K562 (cell line): ENCODE measurements at regions of chr6 and their contacts with region 1.

Region 1: GRCh38 chr6:12605888-12606345 is 110.7 kb upstream of the PHACTR1 start:
- DNase-seq: peak; percentile 34 to 75 (median 45)
- ATAC-seq: peak; percentile 99
- H3K4me3 ChIP-seq: no peak overlapping the region
- H3K27ac ChIP-seq: no peak overlapping the region
- H3K4me1 ChIP-seq: no peaks in the 10 kb centered on the region
- H3K27me3 ChIP-seq: no peaks in the 10 kb centered on the region
- CTCF ChIP-seq: peak; percentile 73 to 83 (median 80)
- EP300 ChIP-seq: no peak
- POLR2A ChIP-seq: no peak
- RAD21 ChIP-seq: peak; percentile 82 to 83

Region 2: DNA sequence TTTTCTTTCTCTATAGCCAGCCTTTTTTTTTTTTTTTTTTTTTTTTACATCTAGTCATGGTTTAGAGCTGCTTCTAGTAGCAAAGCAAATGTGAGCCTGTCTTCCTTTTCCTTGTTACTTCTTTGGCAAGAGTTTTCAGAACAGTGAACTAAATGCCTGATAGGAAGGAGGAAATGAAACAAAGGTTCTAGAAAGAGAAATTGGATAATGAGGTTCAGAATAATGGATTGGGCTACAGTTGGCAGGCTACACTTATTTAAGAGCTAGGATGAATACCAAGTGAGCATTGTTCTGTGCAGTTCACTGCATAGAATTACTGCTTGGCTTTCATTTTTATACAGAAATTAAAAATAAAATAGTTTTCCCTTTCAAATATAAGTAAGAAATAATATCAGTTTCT is 515.2 kb before region 1 on chr6:
- CTCF ChIA-PET with region 1: no interaction called
- POLR2A ChIA-PET with region 1: no interaction called
- in situ Hi-C with region 1: no loop called
- intact Hi-C with region 1: no loop called
- DNase-seq: no peak
- ATAC-seq: no peak; the same call in 2 of the 3 replicates
- H3K4me3 ChIP-seq: no peak overlapping the region
- H3K27ac ChIP-seq: no peak overlapping the region
- H3K4me1 ChIP-seq: no peaks in the 10 kb centered on the region
- H3K27me3 ChIP-seq: no peaks in the 10 kb centered on the region
- CTCF ChIP-seq: no peak
- EP300 ChIP-seq: no peak
- POLR2A ChIP-seq: no peak
- RAD21 ChIP-seq: no peak

Region 3: GRCh38 chr6:12150812-12151432 is 455.0 kb before region 1 on chr6:
- CTCF ChIA-PET with region 1: interaction called, 3 read pairs
- POLR2A ChIA-PET with region 1: no interaction called
- in situ Hi-C with region 1: no loop called
- intact Hi-C with region 1: loop called (anchors 10 kb)
- DNase-seq: peak; percentile 25 to 63 (median 46)
- ATAC-seq: peak; percentile 77
- H3K4me3 ChIP-seq: no peak overlapping the region
- H3K27ac ChIP-seq: no peak overlapping the region
- H3K4me1 ChIP-seq: no peaks in the 10 kb centered on the region
- H3K27me3 ChIP-seq: no peaks in the 10 kb centered on the region
- CTCF ChIP-seq: peak; percentile 52 to 62 (median 59)
- EP300 ChIP-seq: no peak
- POLR2A ChIP-seq: no peak
- RAD21 ChIP-seq: peak; percentile 18 to 47; a peak in 2 of 4 replicates

Region 4: DNA sequence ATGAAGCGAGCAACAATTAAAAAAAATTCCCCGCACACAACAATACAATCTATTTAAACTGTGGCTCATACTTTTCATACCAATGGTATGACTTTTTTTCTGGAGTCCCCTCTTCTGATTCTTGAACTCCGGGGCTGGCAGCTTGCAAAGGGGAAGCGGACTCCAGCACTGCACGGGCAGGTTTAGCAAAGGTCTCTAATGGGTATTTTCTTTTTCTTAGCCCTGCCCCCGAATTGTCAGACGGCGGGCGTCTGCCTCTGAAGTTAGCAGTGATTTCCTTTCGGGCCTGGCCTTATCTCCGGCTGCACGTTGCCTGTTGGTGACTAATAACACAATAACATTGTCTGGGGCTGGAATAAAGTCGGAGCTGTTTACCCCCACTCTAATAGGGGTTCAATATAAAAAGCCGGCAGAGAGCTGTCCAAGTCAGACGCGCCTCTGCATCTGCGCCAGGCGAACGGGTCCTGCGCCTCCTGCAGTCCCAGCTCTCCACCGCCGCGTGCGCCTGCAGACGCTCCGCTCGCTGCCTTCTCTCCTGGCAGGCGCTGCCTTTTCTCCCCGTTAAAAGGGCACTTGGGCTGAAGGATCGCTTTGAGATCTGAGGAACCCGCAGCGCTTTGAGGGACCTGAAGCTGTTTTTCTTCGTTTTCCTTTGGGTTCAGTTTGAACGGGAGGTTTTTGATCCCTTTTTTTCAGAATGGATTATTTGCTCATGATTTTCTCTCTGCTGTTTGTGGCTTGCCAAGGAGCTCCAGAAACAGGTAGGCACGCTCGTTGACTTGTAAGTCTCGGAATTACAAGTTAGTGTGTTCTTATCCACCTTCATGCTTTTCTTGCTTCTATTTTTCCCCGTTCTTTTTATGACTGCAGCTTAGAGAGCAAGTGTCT is 315.7 kb before region 1 on chr6 and contains the start of gene EDN1:
- CTCF ChIA-PET with region 1: interaction called, 3 read pairs
- POLR2A ChIA-PET with region 1: no interaction called
- in situ Hi-C with region 1: no loop called
- intact Hi-C with region 1: loop called (anchors 2 kb)
- DNase-seq: peak; percentile 24 to 47 (median 32)
- ATAC-seq: peak; percentile 87
- H3K4me3 ChIP-seq: no peak within 1 kb of the TSS
- H3K27ac ChIP-seq: no peak within 1 kb of the TSS
- H3K4me1 ChIP-seq: peaks cover 0 to 10% of the 10 kb centered on the region in 2 experiments; a peak in 2 of 5 replicates
- H3K27me3 ChIP-seq: peaks cover 24 to 37% of the 10 kb centered on the region in 2 experiments
- CTCF ChIP-seq: peak in 2 of 3 experiments; percentile 24 to 40; a peak in 2 of 6 replicates
- EP300 ChIP-seq: no peak
- POLR2A ChIP-seq: no peak
- RAD21 ChIP-seq: 0 out of 4 replicates have a peak, but pooled peaks of 1 of the 2 experiments have one; percentile 19
- polyA plus RNA-seq, gene EDN1: not detected